ENCODE measurements at regions of chr6 and their contacts with region 1.

Region 1: GRCh38 chr6:69732640-69733039 is 64.2 kb downstream of the LMBRD1 start:
- DNase-seq: no peak
- H3K4me3 Mint-ChIP-seq: no peak overlapping the region
- H3K27ac Mint-ChIP-seq: no peak overlapping the region
- H3K4me1 Mint-ChIP-seq: no peaks in the 10 kb centered on the region
- H3K27me3 Mint-ChIP-seq: no peaks in the 10 kb centered on the region
- CTCF ChIP-seq: peak; percentile 15

Region 2: DNA sequence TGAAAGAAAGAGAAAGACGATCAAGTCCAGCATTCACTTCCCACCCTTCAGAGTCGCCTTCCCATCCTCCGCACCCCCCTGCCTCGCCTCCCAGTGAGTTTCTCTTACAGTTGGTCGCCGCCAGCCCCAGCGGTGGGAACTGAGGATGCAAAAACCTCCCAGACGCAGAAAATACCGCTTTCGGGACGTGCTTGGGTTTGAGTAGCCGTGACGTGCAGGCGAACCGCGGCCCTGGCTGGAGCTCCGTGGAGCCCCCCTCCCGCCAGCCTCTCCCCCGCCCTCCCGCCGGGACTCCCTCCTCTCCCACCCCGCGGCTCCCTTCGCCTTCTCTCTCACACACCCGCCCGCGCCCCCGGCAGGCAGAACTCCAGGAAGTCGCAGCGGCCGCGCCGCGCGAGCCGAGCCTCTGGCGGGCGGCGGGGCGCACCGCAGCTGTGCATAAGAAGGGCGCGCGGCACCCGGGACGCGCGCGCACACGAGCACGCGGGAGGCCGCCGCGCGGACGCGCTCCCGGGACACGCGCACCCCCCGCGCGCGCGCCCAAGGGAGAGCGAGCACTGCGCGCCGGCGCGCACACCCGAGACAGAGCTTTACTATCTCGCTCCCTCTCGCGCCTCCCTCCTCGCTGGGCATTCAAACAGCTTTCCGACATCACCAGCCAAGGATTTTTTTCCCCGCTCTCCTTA is 1097.8 kb before region 1 on chr6 and contains the start of gene ADGRB3:
- CTCF ChIA-PET with region 1: no interaction called
- intact Hi-C with region 1: loop called (anchors 10 kb)
- DNase-seq: peak; percentile 72
- H3K4me3 Mint-ChIP-seq: peak within 1 kb of the TSS; percentile 78
- H3K27ac Mint-ChIP-seq: peak within 1 kb of the TSS; percentile 2
- H3K4me1 Mint-ChIP-seq: peaks cover 15% of the 10 kb centered on the region
- H3K27me3 Mint-ChIP-seq: peaks cover 45% of the 10 kb centered on the region
- CTCF ChIP-seq: peak; percentile 19
- total RNA-seq, gene ADGRB3: 0.09 and 0.44 TPM in 2 replicates

Region 3: GRCh38 chr6:69768664-69769063 is 36.0 kb after region 1 on chr6:
- CTCF ChIA-PET with region 1: no interaction called
- intact Hi-C with region 1: loop called (anchors 5 kb)
- DNase-seq: no peak
- H3K4me3 Mint-ChIP-seq: no peak overlapping the region
- H3K27ac Mint-ChIP-seq: no peak overlapping the region
- H3K4me1 Mint-ChIP-seq: peaks cover 12% of the 10 kb centered on the region
- H3K27me3 Mint-ChIP-seq: no peaks in the 10 kb centered on the region
- CTCF ChIP-seq: no peak

Region 4: DNA sequence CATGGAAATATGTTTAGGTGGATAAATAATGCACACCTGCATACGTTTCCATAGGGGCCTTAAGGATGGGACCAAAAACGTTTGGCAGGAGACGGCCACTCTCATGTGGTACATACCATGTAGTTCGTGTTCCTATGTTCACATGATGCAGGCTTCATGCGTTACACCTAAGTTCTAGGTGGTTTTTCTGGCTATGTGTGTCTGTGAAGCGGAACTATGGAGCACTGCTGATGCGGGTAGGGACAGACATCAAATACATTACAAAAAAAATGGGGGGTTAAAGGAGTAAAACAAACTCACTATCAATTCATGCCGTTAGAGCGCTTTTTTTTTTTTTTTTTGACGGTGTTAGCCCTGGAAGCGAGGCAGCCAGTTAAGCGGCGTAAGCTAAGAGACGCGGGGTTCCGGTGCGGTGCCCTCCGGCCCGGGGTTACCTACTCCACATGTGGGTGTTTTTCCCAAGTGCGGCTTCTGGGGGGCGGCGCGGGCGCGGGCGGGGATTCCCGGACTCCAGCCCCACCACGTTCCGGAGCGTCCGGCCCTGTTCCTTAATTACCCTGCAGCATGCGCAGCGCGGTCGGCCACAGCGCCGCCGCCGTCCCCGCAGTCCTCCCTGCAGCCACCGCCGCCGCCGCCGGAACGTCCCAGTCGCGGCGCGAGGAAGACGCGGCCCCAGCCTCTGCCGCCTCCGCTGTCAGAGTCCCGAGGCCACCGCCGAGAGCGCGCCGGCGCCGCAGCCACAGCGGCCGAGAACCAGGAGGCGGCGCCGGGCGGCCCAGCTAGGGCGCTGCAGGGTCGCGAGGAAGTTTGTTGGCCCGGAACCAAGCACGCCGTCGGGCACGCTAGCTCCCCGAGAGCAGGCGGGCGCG is 134.4 kb after region 1 on chr6:
- CTCF ChIA-PET with region 1: no interaction called
- intact Hi-C with region 1: loop called (anchors 5 kb)
- DNase-seq: peak; percentile 74
- H3K4me3 Mint-ChIP-seq: peak overlapping the region; percentile 83
- H3K27ac Mint-ChIP-seq: peak overlapping the region; percentile 51
- H3K4me1 Mint-ChIP-seq: peaks cover 19% of the 10 kb centered on the region
- H3K27me3 Mint-ChIP-seq: peaks cover 43% of the 10 kb centered on the region
- CTCF ChIP-seq: no peak

Region 5: GRCh38 chr6:70008189-70008588 is 275.5 kb after region 1 on chr6:
- CTCF ChIA-PET with region 1: no interaction called
- intact Hi-C with region 1: no loop called
- DNase-seq: no peak
- H3K4me3 Mint-ChIP-seq: no peak overlapping the region
- H3K27ac Mint-ChIP-seq: no peak overlapping the region
- H3K4me1 Mint-ChIP-seq: no peaks in the 10 kb centered on the region
- H3K27me3 Mint-ChIP-seq: peaks cover 11% of the 10 kb centered on the region
- CTCF ChIP-seq: no peak

Region 6: GRCh38 chr6:70166088-70166958 is 433.7 kb after region 1 on chr6:
- CTCF ChIA-PET with region 1: interaction called, 3 read pairs
- intact Hi-C with region 1: loop called (anchors 1 kb)
- DNase-seq: peak; percentile 77
- H3K4me3 Mint-ChIP-seq: peak overlapping the region; percentile 56
- H3K27ac Mint-ChIP-seq: no peak overlapping the region
- H3K4me1 Mint-ChIP-seq: peaks cover 16% of the 10 kb centered on the region
- H3K27me3 Mint-ChIP-seq: peaks cover 44% of the 10 kb centered on the region
- CTCF ChIP-seq: peak; percentile 68